HepG2 (cell line): ENCODE measurements at regions of chrX and their contacts with region 1.

Region 1: GRCh38 chrX:119757979-119758730 is at the start of gene SOWAHD:
- DNase-seq: peak; percentile 50
- ATAC-seq: peak; percentile 76
- H3K4me3 ChIP-seq: peak within 1 kb of the TSS; percentile 47 to 69 (median 64); a peak in 5 of 6 replicates
- H3K27ac ChIP-seq: peak within 1 kb of the TSS; percentile 68
- H3K4me1 ChIP-seq: peaks cover 40% of the 10 kb centered on the region
- H3K27me3 ChIP-seq: no peaks in the 10 kb centered on the region
- CTCF ChIP-seq: no peak; the same call in 1 of the 2 replicates
- EP300 ChIP-seq: peak in 1 of 2 experiments; percentile 21; a peak in 1 of 4 replicates
- POLR2A ChIP-seq: no peak; a peak in 2 of 4 replicates
- RAD21 ChIP-seq: no peak
- total RNA-seq, gene SOWAHD: 0.62 and 1.0 TPM in 2 replicates

Region 2: DNA sequence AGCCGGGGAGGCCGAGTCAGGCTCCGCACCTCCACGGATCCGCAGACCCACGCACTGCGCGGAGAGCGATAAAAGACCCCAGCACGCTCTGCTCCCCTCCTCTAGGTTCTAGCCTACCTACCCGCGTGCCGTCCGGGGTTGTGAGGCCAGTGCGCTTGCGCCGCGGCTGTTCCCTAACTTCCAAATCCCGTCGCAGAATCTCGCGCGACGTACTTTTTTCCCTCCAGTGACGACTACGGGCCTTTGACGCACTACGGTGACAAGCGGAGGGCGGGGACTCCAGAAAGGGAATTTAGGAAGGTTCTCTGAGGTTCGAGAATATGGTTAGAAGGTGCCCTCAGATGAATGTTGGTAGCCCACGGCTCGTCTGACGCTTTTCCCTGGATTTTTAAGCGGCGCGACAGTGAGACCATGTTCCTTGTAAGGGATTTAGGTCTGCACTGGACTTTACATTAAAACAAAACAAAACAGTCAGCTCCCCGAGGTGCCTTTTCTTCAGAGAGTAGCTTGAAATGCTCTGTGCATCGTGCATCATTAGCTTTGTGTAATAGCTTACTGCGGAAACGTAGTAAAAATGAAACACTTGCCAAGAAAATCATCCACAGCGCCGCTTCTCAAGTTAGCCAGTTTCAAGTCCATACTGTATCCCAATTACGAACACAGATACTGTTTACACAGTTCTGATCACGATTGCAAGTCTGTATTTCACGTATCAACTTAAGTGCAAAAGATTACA is 151.7 kb before region 1 on chrX and contains the start of gene NKRF:
- CTCF ChIA-PET with region 1: no interaction called
- POLR2A ChIA-PET with region 1: no interaction called
- in situ Hi-C with region 1: no loop called
- intact Hi-C with region 1: loop called (anchors 1 kb)
- DNase-seq: peak; percentile 82
- ATAC-seq: peak; percentile 89
- H3K4me3 ChIP-seq: peak within 1 kb of the TSS; percentile 76 to 89 (median 82)
- H3K27ac ChIP-seq: peak within 1 kb of the TSS; percentile 83
- H3K4me1 ChIP-seq: peaks cover 26% of the 10 kb centered on the region
- H3K27me3 ChIP-seq: no peaks in the 10 kb centered on the region
- CTCF ChIP-seq: no peak
- EP300 ChIP-seq: no peak
- POLR2A ChIP-seq: peak; percentile 88 to 89
- RAD21 ChIP-seq: no peak
- total RNA-seq, gene NKRF: 6.0 and 12.2 TPM in 2 replicates

Region 3: DNA sequence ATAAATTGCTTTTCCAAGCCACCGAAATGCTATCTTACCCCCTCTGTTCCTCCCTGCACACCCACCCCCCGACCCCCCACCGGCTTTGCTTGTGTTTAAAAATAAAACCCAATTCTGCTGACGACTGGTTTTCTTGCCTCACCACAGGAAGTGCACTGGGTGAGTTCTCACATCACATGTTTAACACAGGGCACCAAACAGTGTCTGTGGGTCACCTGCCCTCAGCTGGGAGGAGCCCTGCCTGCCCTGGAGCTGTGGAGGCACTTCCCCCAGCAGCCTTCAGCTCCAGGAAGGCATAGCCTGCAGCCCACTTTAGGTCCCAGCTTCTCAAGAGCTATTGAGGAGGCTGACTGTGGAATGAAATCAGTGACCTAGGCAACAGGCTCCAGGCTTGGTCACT is 544.3 kb after region 1 on chrX:
- CTCF ChIA-PET with region 1: no interaction called
- POLR2A ChIA-PET with region 1: no interaction called
- in situ Hi-C with region 1: no loop called
- intact Hi-C with region 1: no loop called
- DNase-seq: no peak
- ATAC-seq: peak; percentile 74
- H3K4me3 ChIP-seq: no peak overlapping the region
- H3K27ac ChIP-seq: no peak overlapping the region
- H3K4me1 ChIP-seq: peaks cover 14% of the 10 kb centered on the region
- H3K27me3 ChIP-seq: no peaks in the 10 kb centered on the region; a peak in 1 of 5 replicates
- CTCF ChIP-seq: no peak
- EP300 ChIP-seq: no peak
- POLR2A ChIP-seq: no peak
- RAD21 ChIP-seq: no peak